ENCODE measurements at regions of chr1 and their contacts with region 1.

Region 1: GRCh38 chr1:213987927-213988506 is at the start of gene PROX1:
- DNase-seq: no peak
- H3K4me3 ChIP-seq: peak within 1 kb of the TSS; percentile 11 to 56 (median 47)
- H3K27ac ChIP-seq: peak within 1 kb of the TSS; percentile 88 to 93 (median 92)
- H3K4me1 ChIP-seq: peaks cover 37 to 41% of the 10 kb centered on the region in 2 donors
- H3K27me3 ChIP-seq: no peaks in the 10 kb centered on the region
- CTCF ChIP-seq: peak in 3 of 6 experiments; percentile 14 to 21 (median 19)
- POLR2A ChIP-seq: peak; percentile 20 to 97
- total RNA-seq, gene PROX1: 34.6 to 51.3 (median 38.4) TPM

Region 2: GRCh38 chr1:213934642-213935041 is 53.4 kb before region 1 on chr1:
- intact Hi-C with region 1: loop called (anchors 5 kb)
- DNase-seq: peak; percentile 98
- H3K4me3 ChIP-seq: no peak overlapping the region
- H3K27ac ChIP-seq: peak overlapping the region; percentile 69 to 75 (median 71)
- H3K4me1 ChIP-seq: peaks cover 31 to 32% of the 10 kb centered on the region in 2 donors
- H3K27me3 ChIP-seq: no peaks in the 10 kb centered on the region
- CTCF ChIP-seq: no peak
- POLR2A ChIP-seq: no peak

Region 3: DNA sequence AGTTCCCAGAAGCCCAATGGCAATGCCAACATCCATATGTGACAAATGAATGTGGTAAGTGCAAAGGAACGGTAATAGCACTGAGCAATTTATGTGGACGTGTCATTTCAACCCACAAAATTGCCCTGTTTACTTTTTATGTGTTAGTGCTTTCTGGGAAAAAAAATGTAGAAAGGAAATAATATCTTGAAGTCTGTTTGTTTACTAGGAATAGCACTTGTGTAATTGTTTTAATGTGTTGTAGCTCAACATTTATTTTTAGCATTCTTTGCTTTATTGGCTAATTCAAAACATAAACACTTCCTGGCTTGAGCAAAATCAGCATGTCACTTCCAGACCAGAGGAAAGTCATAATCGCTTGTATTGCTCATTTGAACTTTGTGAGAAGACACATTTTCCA is 869.7 kb after region 1 on chr1:
- intact Hi-C with region 1: no loop called
- DNase-seq: no peak
- H3K4me3 ChIP-seq: no peak overlapping the region
- H3K27ac ChIP-seq: no peak overlapping the region
- H3K4me1 ChIP-seq: peaks cover 0 to 6% of the 10 kb centered on the region in 2 donors
- H3K27me3 ChIP-seq: no peaks in the 10 kb centered on the region
- CTCF ChIP-seq: no peak
- POLR2A ChIP-seq: no peak